ENCODE measurements at regions of chr15 and their contacts with region 1.

Region 1: GRCh38 chr15:90071208-90071807 is 31.0 kb downstream of the IDH2 start:
- DNase-seq: peak; percentile 62
- H3K4me3 ChIP-seq: no peak overlapping the region
- H3K27ac ChIP-seq: no peak overlapping the region
- H3K4me1 ChIP-seq: peaks cover 18% of the 10 kb centered on the region
- H3K27me3 ChIP-seq: no peaks in the 10 kb centered on the region
- CTCF ChIP-seq: peak; percentile 70 to 74

Region 2: DNA sequence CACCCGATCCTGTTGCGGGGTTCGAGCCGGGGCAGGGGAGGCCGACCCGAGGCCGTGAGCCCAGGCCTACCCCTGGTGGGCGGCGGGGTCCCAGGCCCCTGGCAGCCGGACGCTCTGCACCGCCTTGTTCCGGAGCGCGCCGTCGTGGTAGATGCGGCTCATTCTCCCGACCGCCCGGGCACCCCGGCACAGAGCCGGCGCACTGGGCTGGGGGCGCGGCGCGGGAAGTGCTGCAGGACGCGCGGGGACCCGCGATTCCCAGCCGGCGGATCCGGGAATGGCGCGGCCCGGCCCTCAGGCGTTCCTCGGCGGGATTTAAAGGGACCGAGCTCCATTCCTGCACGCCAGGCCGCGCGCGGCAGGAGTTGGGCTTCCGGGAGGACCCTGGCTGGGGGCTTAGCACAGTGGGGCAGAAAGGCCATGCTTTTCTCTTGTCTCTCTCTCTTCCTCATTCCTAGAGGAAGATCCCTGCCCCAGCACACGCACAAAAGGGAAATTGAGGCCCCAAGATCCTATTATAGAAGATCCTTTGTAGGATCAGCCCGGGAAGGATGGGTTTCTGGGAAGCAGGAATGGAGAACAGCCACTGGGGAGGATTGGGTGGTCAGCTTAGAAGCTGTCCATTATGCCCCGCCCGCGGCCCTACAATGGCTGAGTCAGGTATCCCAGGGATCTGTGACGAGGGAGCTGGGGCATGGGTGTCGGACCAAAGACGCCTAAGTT is 158.5 kb before region 1 on chr15 and contains the start of gene ARPIN:
- CTCF ChIA-PET with region 1: no interaction called
- dilution Hi-C with region 1: no loop called
- in situ Hi-C with region 1: no loop called
- intact Hi-C with region 1: loop called (anchors 5 kb)
- DNase-seq: peak; percentile 30
- H3K4me3 ChIP-seq: peak within 1 kb of the TSS; percentile 33 to 76 (median 70)
- H3K27ac ChIP-seq: no peak within 1 kb of the TSS
- H3K4me1 ChIP-seq: peaks cover 13% of the 10 kb centered on the region
- H3K27me3 ChIP-seq: no peaks in the 10 kb centered on the region
- CTCF ChIP-seq: no peak
- total RNA-seq, gene ARPIN: 14.3 to 15.9 TPM

Region 3: DNA sequence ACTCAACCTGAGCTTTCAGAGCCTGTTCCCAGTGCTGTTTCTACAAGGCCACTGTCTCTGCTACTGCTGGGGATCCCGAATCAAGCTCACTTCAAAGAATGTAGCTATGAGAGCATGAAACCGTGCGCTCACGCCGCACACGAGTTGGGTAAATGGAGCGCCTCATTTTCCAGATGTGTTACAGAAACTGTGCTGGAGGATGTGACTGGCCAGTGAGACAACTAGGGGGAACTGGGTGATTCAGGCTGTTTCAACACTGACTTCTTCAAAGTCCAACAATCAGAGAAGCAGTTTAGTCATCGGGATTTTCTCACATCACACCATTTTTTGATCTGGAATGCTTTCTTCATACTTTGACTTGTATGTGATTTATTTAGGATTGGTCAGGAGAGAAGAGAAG is 66.6 kb before region 1 on chr15:
- CTCF ChIA-PET with region 1: no interaction called
- dilution Hi-C with region 1: no loop called
- in situ Hi-C with region 1: no loop called
- intact Hi-C with region 1: loop called (anchors 2 kb)
- DNase-seq: peak; percentile 97
- H3K4me3 ChIP-seq: no peak overlapping the region
- H3K27ac ChIP-seq: peak overlapping the region; percentile 90
- H3K4me1 ChIP-seq: peaks cover 49% of the 10 kb centered on the region
- H3K27me3 ChIP-seq: no peaks in the 10 kb centered on the region
- CTCF ChIP-seq: no peak

Measured in mammary epithelial cell (primary cell).